Motor neuron (in vitro differentiated cells): ENCODE measurements at regions of chr17 and their contacts with region 1.

Region 1: DNA sequence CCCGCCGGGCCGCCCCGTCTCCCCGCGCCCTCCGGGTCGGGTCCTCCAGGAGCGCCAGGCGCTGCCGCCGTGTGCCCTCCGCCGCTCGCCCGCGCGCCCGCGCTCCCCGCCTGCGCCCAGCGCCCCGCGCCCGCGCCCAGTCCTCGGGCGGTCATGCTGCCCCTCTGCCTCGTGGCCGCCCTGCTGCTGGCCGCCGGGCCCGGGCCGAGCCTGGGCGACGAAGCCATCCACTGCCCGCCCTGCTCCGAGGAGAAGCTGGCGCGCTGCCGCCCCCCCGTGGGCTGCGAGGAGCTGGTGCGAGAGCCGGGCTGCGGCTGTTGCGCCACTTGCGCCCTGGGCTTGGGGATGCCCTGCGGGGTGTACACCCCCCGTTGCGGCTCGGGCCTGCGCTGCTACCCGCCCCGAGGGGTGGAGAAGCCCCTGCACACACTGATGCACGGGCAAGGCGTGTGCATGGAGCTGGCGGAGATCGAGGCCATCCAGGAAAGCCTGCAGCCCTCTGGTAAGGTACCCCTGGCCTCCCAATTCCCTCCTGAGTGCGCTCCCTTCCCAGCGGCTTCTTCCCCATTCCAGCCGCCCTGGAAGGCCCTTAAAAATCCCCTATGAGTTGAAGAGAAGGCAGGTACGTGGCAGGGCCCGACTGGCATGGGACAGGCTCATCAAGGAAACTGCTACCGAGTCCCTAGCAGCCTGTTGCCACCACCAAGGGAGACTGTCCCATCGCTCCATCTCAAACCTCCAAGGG is 505 bp downstream of the IGFBP4 start:
- ATAC-seq: peak; percentile 78 to 92 (median 88)
- H3K4me3 ChIP-seq: peak overlapping the region; percentile 52 to 74 (median 54)
- H3K27ac ChIP-seq: peak overlapping the region; percentile 40 to 61
- H3K4me1 ChIP-seq: peaks cover 20 to 21% of the 10 kb centered on the region in 2 donors

Region 2: GRCh38 chr17:40536295-40537171 is 92.8 kb after region 1 on chr17:
- in situ Hi-C with region 1: loop called in 2 of 9 experiments (anchors 10 to 25 kb)
- ATAC-seq: peak in 2 of 8 experiments; percentile 7 to 9
- H3K4me3 ChIP-seq: no peak overlapping the region
- H3K27ac ChIP-seq: no peak overlapping the region
- H3K4me1 ChIP-seq: peaks cover 7 to 13% of the 10 kb centered on the region in 2 donors

Region 3: DNA sequence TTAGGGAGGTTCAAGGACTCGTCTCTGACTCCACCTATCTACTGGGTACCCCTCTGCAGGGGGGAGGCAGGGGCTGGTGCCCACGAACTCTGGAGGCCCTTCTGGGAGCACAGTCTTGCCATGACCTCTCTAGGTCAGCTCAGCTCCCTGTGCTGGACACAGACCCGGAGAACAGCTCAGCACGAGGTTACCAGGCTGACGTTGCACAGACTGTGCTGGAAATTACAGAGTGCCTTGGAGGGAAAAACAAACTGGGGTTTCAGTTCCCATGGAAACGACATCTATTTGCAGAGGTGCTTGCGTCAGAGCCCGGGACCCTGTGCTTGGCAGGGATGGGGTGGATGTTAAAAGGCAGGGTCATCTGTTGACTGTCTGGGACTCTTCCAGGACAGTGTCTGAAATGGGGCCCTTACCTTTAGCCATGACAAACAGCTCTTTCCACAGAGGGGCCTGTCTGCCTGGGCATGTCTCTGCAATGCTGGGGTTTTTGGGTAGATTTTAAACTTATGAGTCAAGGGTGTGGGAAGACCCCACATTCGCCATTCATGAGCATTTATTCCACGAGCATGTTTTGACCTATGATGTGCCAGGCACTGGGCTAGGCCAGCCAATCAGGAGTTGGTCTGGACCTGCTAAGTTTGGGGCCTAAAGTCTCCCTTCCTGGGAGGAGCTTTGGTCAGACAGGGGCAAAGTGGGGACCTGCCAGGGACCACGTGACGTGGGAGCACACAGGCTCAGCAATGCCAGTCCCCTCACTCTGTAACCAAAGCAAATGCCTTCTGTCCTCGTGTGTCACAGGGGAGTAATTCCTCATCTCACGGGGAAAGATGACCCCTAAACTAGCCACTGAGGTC is 99.0 kb after region 1 on chr17:
- in situ Hi-C with region 1: loop called in 2 of 9 experiments (anchors 10 to 25 kb)
- ATAC-seq: peak; percentile 80 to 96 (median 92)
- H3K4me3 ChIP-seq: no peak overlapping the region
- H3K27ac ChIP-seq: peak overlapping the region; percentile 87 to 89
- H3K4me1 ChIP-seq: peaks cover 29 to 38% of the 10 kb centered on the region in 2 donors

Region 4: GRCh38 chr17:40617678-40618240 is 174.0 kb after region 1 on chr17:
- in situ Hi-C with region 1: no loop called
- ATAC-seq: peak in 2 of 8 experiments; percentile 9 to 17
- H3K4me3 ChIP-seq: no peak overlapping the region
- H3K27ac ChIP-seq: no peak overlapping the region
- H3K4me1 ChIP-seq: no peaks in the 10 kb centered on the region